Right cardiac atrium (tissue), 5 donors: ENCODE measurements at regions of chr11 and their contacts with region 1.

Region 1: DNA sequence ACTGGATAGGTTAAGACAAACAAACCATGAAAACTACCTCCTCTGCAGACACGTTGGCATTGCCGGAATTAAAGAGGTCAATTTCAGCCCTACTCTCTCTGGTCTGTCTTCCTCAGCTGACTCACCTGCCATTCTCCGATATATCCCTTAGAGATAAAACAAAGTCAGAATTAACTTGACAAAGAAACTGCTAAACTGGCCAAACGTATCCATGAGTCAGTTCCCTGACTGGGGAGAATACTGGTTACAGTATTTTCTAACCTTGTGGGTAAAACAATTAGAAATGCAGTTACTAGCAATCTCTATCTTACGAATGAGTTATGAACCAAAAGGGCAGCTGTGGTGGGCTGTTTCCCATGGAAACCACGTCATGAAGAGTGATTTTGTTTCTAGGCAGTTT is 96.2 kb downstream of the RDX start:
- DNase-seq: no peak
- ATAC-seq: no peak
- H3K4me3 ChIP-seq: no peak overlapping the region
- H3K27ac ChIP-seq: no peak overlapping the region
- H3K4me1 ChIP-seq: no peaks in the 10 kb centered on the region
- H3K27me3 ChIP-seq: no peaks in the 10 kb centered on the region

Region 2: DNA sequence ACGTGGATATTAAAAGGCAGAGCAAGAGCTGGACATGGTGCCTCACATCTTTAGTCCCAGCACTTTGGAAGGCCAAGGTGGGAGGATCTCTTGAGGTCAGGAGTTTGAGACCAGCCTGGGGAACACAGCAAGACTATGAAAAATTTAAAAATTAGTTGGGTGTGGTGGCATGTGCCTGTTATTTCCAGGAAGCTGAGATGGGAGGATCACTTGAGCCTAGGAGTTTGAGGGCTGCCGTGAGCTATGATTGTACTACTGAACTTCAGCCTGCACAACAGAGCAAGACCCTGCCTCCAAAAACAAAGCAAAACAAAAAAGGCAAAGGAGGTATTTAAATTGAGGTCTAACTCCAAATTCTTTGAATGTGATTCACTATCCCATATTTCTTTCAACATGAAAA is 72.7 kb after region 1 on chr11:
- intact Hi-C with region 1: no loop called
- DNase-seq: no peak
- ATAC-seq: no peak
- H3K4me3 ChIP-seq: no peak overlapping the region
- H3K27ac ChIP-seq: no peak overlapping the region
- H3K4me1 ChIP-seq: peaks cover 3% of the 10 kb centered on the region
- H3K27me3 ChIP-seq: no peaks in the 10 kb centered on the region

Region 3: DNA sequence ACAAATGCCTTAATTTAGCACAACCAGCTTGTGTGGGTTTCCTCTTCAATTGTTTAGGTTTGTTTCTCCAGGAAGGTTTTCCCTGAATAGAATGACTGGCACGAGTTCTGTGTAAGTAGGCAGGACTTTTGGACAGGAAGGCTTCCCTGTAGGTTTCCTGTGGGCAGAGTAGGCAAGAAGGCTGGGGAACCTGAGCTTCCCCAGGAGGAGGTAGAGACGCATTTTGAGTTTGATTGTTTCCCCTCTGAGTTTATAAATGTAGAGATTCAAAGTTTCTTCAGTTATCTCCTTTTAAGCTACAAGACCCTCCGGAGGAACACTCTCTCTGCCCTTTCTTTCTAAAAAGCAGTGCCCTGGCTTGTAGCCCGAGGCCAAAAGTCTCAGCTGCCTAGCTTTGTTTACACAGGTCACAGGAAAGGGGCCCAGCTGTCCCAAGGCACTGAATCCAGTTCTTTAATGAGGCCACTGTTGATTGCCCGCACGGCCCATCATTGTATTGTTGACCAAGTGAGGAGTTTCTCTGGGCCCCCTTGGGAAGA is 162.8 kb after region 1 on chr11:
- intact Hi-C with region 1: loop called in 2 of 4 experiments (anchors 5 kb)
- DNase-seq: peak in 1 of 3 donors; percentile 34
- ATAC-seq: peak; percentile 70 to 84
- H3K4me3 ChIP-seq: no peak overlapping the region
- H3K27ac ChIP-seq: peak overlapping the region; percentile 52
- H3K4me1 ChIP-seq: peaks cover 2% of the 10 kb centered on the region
- H3K27me3 ChIP-seq: no peaks in the 10 kb centered on the region

Region 4: GRCh38 chr11:110376711-110377324 is 176.6 kb after region 1 on chr11:
- intact Hi-C with region 1: loop called in 2 of 4 experiments (anchors 2 to 5 kb)
- DNase-seq: peak; percentile 82 to 87 (median 83)
- ATAC-seq: peak; percentile 91 to 94
- H3K4me3 ChIP-seq: no peak overlapping the region
- H3K27ac ChIP-seq: no peak overlapping the region
- H3K4me1 ChIP-seq: peaks cover 1% of the 10 kb centered on the region
- H3K27me3 ChIP-seq: no peaks in the 10 kb centered on the region

Region 5: DNA sequence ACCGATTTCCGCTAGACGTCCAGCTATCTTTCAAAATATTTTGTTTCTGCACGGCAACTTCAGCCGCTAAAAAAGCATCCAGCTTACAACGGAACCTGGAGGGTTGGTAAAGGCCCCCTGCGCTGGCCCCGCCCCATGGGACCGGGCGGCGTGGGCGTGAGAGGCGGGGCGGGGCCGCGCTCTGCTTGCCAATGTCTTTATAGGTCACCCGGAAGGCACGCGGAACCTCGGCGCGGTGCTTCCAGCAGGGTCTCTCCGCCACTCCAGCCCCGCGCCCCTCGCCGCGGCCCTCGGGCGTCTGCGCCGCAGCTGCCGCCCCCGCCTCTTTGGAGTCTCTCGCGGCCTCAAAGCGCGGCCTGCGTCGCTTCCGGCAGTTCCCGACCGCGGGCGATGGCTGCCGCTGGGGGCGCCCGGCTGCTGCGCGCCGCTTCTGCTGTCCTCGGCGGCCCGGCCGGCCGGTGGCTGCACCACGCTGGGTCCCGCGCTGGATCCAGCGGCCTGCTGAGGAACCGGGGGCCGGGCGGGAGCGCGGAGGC is 229.6 kb after region 1 on chr11 and contains the start of gene FDX1:
- intact Hi-C with region 1: loop called (anchors 5 kb)
- DNase-seq: peak; percentile 86 to 94 (median 93)
- ATAC-seq: peak; percentile 95 to 97
- H3K4me3 ChIP-seq: peak within 1 kb of the TSS; percentile 70
- H3K27ac ChIP-seq: peak within 1 kb of the TSS; percentile 76
- H3K4me1 ChIP-seq: no peaks in the 10 kb centered on the region
- H3K27me3 ChIP-seq: no peaks in the 10 kb centered on the region
- total RNA-seq, gene FDX1: 16.3 to 18.6 (median 17.2) TPM